IMR-90 (cell line): ENCODE measurements at regions of chr1 and their contacts with region 1.

Region 1: DNA sequence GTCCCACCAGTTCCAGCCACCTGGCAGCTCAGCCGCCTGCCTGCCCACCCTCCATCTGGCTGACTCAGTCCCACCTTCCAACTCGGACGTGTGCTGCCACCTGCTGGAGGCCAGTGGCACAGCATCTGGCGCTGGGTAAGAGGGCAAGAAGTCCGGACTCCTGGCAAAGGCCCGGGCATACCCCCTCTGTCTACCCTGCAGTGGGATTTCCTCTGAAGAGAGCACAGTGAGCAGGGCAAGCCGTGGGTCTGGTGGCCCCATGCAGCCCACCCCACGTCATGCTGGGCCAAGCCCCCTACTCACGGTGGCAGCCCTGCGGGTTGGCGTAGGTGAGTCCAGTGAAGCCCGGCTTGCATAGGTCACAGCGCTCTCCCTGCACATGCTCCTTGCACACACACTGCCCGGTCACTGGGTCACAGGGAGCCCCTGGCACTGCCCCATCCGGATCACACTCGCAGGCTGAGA is 24.5 kb downstream of the LAMB3 start:
- DNase-seq: peak; percentile 69
- ATAC-seq: peak; percentile 96
- H3K4me3 ChIP-seq: no peak overlapping the region
- H3K27ac ChIP-seq: no peak overlapping the region
- H3K4me1 ChIP-seq: no peaks in the 10 kb centered on the region; the same call in none of the 2 replicates
- H3K27me3 ChIP-seq: no peaks in the 10 kb centered on the region
- CTCF ChIP-seq: peak; percentile 82
- POLR2A ChIP-seq: no peak
- RAD21 ChIP-seq: peak; percentile 78

Region 2: DNA sequence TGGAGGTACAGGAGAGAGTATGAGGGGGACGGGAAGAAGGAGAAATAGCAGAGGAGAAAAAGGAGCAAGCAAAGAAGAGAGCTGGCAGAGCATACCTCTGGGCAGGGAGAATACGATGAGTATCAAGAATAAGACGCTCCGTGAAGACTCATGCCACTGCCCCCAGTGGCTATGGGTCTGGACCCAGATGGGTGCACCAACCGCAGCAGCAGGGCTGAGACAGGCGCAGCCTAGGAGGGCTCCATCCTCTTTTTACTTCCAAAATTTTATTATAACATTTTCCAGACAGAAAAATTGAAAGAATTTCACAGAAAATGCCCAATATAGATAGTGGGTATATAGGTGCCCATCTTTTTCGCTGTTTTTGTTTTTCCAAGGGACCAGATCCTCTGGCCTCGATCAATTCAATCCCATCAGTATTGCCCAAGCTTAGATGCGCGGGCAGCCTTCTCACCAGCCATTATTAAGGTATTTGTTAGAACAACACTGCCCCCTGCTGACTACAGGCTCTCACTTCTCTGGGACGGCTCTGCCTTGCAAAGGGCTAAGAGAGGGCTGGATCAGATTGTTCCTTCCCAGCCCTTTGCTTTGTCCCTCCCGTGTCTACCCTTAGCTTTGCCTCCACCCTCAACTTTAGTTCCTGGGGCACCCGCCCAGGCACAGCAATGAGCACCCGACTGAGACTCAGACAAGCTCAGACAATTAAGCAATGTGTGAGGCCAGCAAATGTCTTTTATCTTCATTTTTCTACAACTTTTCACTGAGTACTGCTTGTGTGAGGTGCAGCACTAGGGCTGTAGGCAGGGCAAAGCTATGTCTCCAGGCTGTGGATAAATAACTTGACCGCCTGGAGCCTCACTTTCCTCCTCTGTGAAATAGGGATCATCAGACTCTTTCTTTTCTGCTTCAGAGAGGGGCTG is 61.7 kb before region 1 on chr1:
- CTCF ChIA-PET with region 1: interaction called, 4 read pairs
- POLR2A ChIA-PET with region 1: no interaction called
- dilution Hi-C with region 1: no loop called
- in situ Hi-C with region 1: no loop called
- intact Hi-C with region 1: loop called (anchors 1 kb)
- DNase-seq: peak; percentile 75
- ATAC-seq: peak; percentile 98
- H3K4me3 ChIP-seq: no peak overlapping the region
- H3K27ac ChIP-seq: no peak overlapping the region
- H3K4me1 ChIP-seq: no peaks in the 10 kb centered on the region
- H3K27me3 ChIP-seq: peaks cover 19% of the 10 kb centered on the region
- CTCF ChIP-seq: peak; percentile 73
- POLR2A ChIP-seq: no peak
- RAD21 ChIP-seq: peak; percentile 58

Region 3: DNA sequence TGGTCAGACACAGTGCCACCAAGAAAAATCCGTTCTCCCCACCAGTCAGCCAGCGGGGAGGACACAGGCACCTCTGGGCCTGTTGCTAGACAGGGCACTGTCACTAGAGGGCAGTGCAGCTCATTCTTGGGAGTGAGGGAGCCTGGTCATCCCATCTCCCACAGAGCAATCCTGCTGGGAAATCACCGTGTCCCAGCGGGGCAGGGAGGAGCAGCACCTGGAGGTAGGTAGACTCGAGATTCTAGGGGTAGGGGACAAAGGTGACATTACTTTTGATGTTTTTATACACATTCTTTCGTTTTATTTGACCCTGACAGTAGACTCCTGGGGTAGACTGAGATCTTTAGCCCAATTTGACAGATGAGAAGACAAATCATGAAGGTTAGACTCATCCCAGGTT is 51.0 kb before region 1 on chr1:
- CTCF ChIA-PET with region 1: no interaction called
- POLR2A ChIA-PET with region 1: no interaction called
- dilution Hi-C with region 1: no loop called
- in situ Hi-C with region 1: loop called (anchors 5 kb)
- intact Hi-C with region 1: loop called (anchors 1 kb)
- DNase-seq: peak; percentile 58
- ATAC-seq: peak; percentile 99
- H3K4me3 ChIP-seq: no peak overlapping the region
- H3K27ac ChIP-seq: no peak overlapping the region
- H3K4me1 ChIP-seq: no peaks in the 10 kb centered on the region
- H3K27me3 ChIP-seq: peaks cover 14% of the 10 kb centered on the region
- CTCF ChIP-seq: peak; percentile 91
- POLR2A ChIP-seq: no peak; the same call in 1 of the 2 replicates
- RAD21 ChIP-seq: peak; percentile 89

Region 4: DNA sequence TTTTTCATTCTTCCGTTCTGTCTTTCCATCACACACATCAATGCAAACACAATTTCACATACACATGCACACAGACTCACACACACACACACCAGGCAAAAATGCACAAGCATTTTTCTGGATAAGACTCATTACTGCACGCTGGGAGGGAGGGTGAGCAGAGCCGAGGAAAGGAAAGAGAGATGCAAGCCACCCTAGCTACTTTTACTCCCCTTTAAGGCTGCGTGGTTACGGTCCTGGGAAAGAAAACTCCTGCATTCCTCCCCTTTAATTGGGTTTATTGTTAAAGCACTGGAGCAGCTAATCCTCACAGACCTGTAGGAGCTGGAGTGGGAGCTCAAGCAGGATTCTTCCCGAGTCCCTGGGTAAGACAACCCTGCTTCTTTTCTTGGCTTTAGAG is 44.4 kb before region 1 on chr1 and contains the start of gene CAMK1G:
- CTCF ChIA-PET with region 1: no interaction called
- POLR2A ChIA-PET with region 1: interaction called, 23 read pairs
- dilution Hi-C with region 1: no loop called
- in situ Hi-C with region 1: loop called (anchors 5 kb)
- intact Hi-C with region 1: no loop called
- DNase-seq: peak; percentile 80
- ATAC-seq: peak; percentile 74
- H3K4me3 ChIP-seq: peak within 1 kb of the TSS; percentile 48
- H3K27ac ChIP-seq: no peak within 1 kb of the TSS
- H3K4me1 ChIP-seq: no peaks in the 10 kb centered on the region
- H3K27me3 ChIP-seq: 0 out of 2 replicates have a peak, but pooled peaks cover 2% of the 10 kb centered on the region
- CTCF ChIP-seq: no peak
- POLR2A ChIP-seq: no peak
- RAD21 ChIP-seq: no peak
- total RNA-seq, gene CAMK1G: 0.72 and 0.83 TPM in 2 replicates

Region 5: DNA sequence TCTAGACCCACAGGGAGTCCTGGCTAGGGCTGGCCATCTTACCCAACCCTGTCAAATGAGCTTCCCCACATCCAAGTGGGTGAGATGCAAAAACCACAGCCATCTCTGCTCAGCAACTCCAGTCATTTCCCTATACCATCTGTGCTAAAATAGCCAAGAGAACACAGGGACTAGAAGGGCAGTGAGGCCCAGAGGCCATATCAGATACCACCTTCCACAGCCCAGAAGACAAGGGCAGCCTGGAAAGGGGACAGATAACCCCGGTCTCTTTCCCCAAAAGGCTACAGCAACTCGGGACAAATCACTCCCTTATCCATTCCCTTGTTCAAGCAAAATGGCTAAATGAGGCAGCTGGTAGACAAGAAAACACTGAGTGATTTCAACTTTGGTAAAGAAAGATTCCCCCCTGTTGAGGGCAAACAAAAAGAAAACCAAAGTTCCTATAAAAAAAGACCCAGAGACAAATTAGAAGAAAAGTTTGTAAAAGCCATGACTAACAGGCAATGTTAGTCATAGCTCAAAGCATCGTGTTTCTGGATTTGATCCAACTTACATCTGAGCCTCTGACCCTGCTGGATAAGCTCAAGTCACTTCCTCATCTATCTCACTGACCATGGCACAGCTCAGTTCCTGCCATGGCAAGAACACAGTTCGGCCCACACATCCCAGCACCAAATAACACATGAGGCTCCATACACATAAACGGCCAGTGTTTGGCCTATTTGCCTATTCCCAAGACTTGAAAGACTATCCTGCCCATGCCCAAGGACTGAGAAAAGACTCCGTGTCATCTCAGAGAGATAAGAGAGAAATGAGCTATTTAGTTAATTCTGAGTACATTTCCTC is 21.4 kb after region 1 on chr1:
- CTCF ChIA-PET with region 1: interaction called, 11 read pairs
- POLR2A ChIA-PET with region 1: no interaction called
- dilution Hi-C with region 1: no loop called
- in situ Hi-C with region 1: no loop called
- intact Hi-C with region 1: no loop called
- DNase-seq: peak; percentile 96
- ATAC-seq: peak; percentile 75
- H3K4me3 ChIP-seq: no peak overlapping the region
- H3K27ac ChIP-seq: peak overlapping the region; percentile 84
- H3K4me1 ChIP-seq: peaks cover 25% of the 10 kb centered on the region
- H3K27me3 ChIP-seq: no peaks in the 10 kb centered on the region; the same call in 1 of the 2 replicates
- CTCF ChIP-seq: no peak
- POLR2A ChIP-seq: no peak
- RAD21 ChIP-seq: no peak